Activated T-helper 1 cell treated with anti-CD3 and anti-CD28 coated beads, Interleukin-12 subunit alpha, Interleukin-12 subunit beta, Interleukin-2, Interleukin-4 antibody, amounts not matched to agents 30 ng/mL and 10 ng/mL and 1 ng/mL, durations not matched to agents 14 hours and 24 hours and 36 hours (primary cell): ENCODE measurements at regions of chr3 and their contacts with region 1.

Region 1: GRCh38 chr3:188061133-188061532 is 92.8 kb upstream of the LPP start:
- DNase-seq: peak; percentile 38
- H3K4me3 Mint-ChIP-seq: peak overlapping the region; percentile 61
- H3K27ac Mint-ChIP-seq: peak overlapping the region; percentile 87
- H3K4me1 Mint-ChIP-seq: peaks cover 53% of the 10 kb centered on the region
- H3K27me3 Mint-ChIP-seq: no peaks in the 10 kb centered on the region

Region 2: GRCh38 chr3:187870360-187871203 is 190.6 kb before region 1 on chr3:
- intact Hi-C with region 1: loop called (anchors 5 kb)
- DNase-seq: no peak
- H3K4me3 Mint-ChIP-seq: peak overlapping the region; percentile 49
- H3K27ac Mint-ChIP-seq: peak overlapping the region; percentile 84
- H3K4me1 Mint-ChIP-seq: peaks cover 32% of the 10 kb centered on the region
- H3K27me3 Mint-ChIP-seq: no peaks in the 10 kb centered on the region

Region 3: DNA sequence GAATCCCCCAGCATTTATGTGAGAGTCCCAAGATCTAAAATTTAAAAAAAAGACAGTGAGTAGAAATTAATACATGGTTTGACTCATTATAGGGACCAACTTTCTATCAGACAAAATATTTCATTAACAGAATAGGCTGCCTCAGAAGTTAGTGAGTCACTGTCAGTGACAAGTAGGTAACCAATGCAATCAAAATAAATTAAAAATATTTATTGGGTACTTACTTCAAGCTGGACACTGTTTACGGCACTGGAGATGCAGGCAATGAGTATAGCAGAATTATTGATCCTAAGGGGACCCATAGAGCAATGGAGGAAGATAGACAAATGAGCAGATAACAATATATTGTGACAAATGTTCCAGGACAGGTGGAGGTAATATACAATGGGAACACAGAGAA is 180.3 kb before region 1 on chr3:
- intact Hi-C with region 1: no loop called
- DNase-seq: no peak
- H3K4me3 Mint-ChIP-seq: no peak overlapping the region
- H3K27ac Mint-ChIP-seq: no peak overlapping the region
- H3K4me1 Mint-ChIP-seq: no peaks in the 10 kb centered on the region
- H3K27me3 Mint-ChIP-seq: peaks cover 1% of the 10 kb centered on the region

Region 4: GRCh38 chr3:188000361-188000861 is 60.7 kb before region 1 on chr3:
- intact Hi-C with region 1: loop called (anchors 5 kb)
- DNase-seq: no peak
- H3K4me3 Mint-ChIP-seq: peak overlapping the region; percentile 71
- H3K27ac Mint-ChIP-seq: peak overlapping the region; percentile 93
- H3K4me1 Mint-ChIP-seq: peaks cover 84% of the 10 kb centered on the region
- H3K27me3 Mint-ChIP-seq: no peaks in the 10 kb centered on the region

Region 5: DNA sequence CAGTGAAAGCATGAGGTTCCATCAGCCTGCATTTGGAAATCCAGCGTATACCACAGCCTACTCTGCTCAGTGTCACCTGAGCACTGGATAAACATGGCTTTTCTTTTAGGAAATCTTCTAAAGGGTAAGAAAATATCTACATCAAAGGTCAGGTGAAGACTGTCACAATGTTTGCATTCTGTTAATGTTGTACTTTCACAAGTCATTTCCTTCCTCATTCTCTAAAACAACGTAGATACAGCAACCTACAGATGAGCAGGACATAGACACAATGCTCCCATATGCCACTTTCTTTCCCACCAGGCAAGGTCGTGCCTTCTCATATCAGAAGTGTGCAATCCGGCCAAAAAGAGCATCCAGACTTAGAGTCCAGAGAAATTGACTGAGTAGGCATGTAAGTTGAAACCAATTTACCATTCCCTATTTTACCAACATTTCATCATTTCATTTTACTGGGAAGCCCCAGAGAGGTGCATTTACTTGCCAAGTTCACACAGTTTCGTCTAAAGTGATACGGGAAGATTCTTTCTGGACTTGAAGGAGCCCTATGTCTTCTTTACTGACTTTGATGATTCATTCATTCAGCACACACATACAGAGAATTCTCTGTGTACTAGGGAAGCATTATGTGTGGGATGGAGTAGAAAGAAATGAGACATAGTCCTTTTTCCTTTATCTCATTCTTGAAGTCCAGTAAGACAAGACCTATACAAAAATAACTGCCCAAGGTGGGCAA is 62.2 kb after region 1 on chr3:
- intact Hi-C with region 1: loop called (anchors 5 kb)
- DNase-seq: no peak
- H3K4me3 Mint-ChIP-seq: no peak overlapping the region
- H3K27ac Mint-ChIP-seq: peak overlapping the region; percentile 7
- H3K4me1 Mint-ChIP-seq: peaks cover 17% of the 10 kb centered on the region
- H3K27me3 Mint-ChIP-seq: peaks cover 1% of the 10 kb centered on the region

Region 6: DNA sequence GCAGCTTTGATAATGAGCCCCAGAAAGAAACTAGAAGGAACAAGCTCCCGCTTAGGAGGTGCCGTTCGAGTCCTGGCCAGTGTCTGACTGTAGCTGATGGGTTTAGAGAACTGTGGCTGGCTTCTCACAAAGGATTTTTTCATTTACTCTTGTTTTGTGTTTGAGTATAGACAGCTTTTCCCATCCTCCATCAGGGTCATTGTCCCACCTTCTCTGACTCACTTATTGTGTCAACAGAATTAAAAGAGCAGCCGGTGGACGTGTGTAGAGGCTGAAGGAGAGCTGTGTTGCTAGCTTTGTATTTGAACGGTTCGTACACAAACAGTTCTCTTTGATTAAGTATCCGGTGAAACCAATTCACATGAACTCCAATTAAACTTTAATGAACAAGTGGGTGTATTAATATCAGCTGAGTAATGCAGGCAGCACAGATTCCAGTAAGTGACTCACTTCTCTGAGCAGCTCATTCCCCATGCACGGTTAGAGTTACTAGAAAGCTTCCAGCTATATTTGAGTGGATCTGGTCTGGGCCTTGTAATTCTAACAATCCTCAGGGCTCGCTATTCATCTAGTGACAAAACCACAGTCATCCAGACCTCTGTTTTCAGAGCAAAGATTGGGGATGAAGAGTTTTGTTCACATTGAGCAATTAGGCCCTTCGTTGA is 233.8 kb after region 1 on chr3:
- intact Hi-C with region 1: loop called (anchors 2 kb)
- DNase-seq: no peak
- H3K4me3 Mint-ChIP-seq: no peak overlapping the region
- H3K27ac Mint-ChIP-seq: peak overlapping the region; percentile 33
- H3K4me1 Mint-ChIP-seq: peaks cover 86% of the 10 kb centered on the region
- H3K27me3 Mint-ChIP-seq: no peaks in the 10 kb centered on the region

Region 7: DNA sequence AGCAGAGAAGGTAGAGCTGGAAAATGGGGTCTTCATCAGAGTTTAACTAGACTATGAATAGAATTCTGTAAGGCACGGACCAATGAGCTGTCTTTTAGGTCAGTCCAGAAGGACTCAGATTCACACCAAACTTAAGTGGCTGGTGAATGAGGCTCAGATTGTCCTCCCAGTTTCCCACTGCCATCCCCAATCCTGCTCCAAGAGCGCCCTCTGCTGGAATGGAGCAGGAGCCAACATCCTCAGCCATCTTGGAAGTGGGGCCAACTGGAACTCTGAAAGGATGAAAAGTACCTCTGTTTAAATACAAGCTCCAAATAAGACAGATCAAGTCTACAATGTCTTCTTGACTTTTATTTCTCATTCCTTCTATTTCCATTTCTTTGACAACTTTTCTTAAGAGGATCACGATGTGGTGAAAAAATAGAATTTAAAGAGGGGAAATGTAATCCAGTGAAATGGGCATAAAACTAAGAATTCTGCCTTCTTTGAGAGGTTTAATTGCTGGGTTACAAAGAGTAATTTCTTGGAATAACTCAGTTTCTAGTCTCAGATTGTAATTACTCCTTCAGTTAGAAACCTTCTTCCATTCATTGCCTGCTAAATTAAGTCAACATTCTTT is 893.6 kb after region 1 on chr3:
- intact Hi-C with region 1: loop called (anchors 5 kb)
- DNase-seq: peak; percentile 68
- H3K4me3 Mint-ChIP-seq: no peak overlapping the region
- H3K27ac Mint-ChIP-seq: no peak overlapping the region
- H3K4me1 Mint-ChIP-seq: peaks cover 46% of the 10 kb centered on the region
- H3K27me3 Mint-ChIP-seq: no peaks in the 10 kb centered on the region